ENCODE measurements at regions of chr21 and their contacts with region 1.

Region 1: DNA sequence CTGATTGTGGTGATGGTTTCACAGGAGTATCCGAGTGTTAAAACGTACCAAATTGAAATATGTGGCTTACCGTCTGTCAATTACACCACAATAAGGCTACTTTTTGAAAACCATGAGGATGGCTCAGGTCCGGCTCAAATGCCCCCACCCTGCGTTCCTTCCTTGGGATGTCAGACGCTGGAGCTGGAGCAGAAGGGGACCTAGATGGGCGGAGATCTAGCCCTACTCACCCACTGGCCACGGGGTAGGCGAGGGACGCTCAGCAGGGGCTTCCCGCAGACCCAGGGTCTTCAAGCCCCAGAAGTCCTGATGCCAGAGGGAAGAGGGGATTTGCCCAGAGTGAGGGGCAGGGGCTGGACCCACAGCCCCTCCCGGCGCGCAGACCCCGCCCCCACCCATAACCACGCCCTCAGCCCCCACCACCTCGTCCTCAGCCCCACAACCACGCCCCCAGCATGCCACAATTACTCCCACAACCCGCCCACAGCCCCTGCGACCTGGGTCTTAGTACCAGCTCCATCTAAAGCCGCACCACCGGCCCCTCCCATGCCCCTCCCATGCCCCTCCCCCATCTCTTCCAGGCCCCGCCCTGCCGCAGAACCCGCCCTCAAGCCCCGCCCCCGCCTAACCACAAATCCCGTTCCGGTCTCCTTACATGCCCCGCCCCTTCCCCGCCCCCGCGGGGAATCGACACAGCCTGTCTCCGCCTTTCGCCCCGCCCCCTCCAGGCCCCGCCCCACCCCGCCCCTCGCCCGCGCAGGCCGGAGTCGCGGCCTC is at the start of gene LRRC3:
- DNase-seq: no peak
- H3K4me3 ChIP-seq: peak within 1 kb of the TSS; percentile 75 to 83
- H3K27ac ChIP-seq: no peak within 1 kb of the TSS
- H3K4me1 ChIP-seq: peaks cover 9% of the 10 kb centered on the region
- H3K27me3 ChIP-seq: no peaks in the 10 kb centered on the region
- CTCF ChIP-seq: no peak
- POLR2A ChIP-seq: no peak
- total RNA-seq, gene LRRC3: 2.5 TPM

Region 2: GRCh38 chr21:44583089-44583799 is 128.3 kb after region 1 on chr21:
- intact Hi-C with region 1: loop called (anchors 10 kb)
- DNase-seq: peak in 1 of 2 donors; percentile 81
- H3K4me3 ChIP-seq: no peak overlapping the region
- H3K27ac ChIP-seq: no peak overlapping the region
- H3K4me1 ChIP-seq: no peaks in the 10 kb centered on the region
- H3K27me3 ChIP-seq: no peaks in the 10 kb centered on the region
- CTCF ChIP-seq: no peak
- POLR2A ChIP-seq: no peak